Activated naive CD4-positive, alpha-beta T cell treated with anti-CD3 and anti-CD28 coated beads for 36 hours (primary cell): ENCODE measurements at regions of chr7 and their contacts with region 1.

Region 1: GRCh38 chr7:108308903-108309302 is 147.3 kb downstream of the NRCAM start:
- DNase-seq: peak; percentile 34
- H3K4me3 Mint-ChIP-seq: no peak overlapping the region
- H3K27ac Mint-ChIP-seq: no peak overlapping the region
- H3K4me1 Mint-ChIP-seq: peaks cover 24% of the 10 kb centered on the region
- H3K27me3 Mint-ChIP-seq: peaks cover 3% of the 10 kb centered on the region

Region 2: GRCh38 chr7:108190891-108191290 is 118.0 kb before region 1 on chr7:
- CTCF ChIA-PET with region 1: no interaction called
- intact Hi-C with region 1: loop called (anchors 1 kb)
- DNase-seq: no peak
- H3K4me3 Mint-ChIP-seq: no peak overlapping the region
- H3K27ac Mint-ChIP-seq: no peak overlapping the region
- H3K4me1 Mint-ChIP-seq: peaks cover 10% of the 10 kb centered on the region
- H3K27me3 Mint-ChIP-seq: no peaks in the 10 kb centered on the region

Region 3: DNA sequence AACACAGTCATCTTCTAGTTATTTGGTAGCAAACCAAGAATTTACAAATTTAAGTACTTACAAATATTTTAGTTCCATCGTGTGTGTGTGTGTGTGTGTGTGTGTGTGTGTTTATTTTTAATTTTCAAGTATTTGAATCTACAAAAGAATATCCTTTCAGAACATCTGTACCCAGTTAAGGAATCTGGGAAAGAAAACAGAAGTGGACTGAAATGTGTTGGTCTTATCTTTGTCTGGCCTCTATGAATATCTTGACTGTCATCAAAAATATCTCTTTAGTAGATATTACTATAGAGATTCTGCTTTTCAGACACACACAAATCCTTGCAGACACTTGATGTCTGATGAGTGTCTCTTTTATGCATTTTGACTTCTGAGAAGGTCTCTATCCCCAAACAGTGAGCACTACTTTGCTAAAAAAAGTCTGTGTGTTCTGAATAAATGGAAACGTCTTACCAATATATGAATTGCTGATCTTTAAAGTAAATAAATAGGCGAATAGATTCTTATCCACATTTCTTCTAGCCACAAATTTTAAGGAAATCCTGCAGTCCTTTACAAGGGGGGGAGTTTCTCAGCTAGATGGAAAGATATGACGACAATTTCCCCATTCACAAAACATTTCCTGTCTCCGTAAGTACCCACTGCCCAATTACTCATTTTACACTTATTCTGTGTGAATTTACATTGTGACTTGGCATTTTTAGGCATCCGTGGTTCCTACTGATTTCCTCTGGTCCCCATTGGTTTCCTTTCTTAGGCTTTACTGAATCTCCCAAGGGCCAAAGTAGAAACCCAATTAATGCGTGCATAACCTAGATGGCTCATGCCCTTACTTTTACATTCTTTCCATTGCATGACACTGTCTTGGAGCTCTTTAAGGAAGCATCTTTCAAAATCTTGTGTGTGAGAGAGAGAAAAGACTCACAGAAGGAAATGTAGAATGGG is 111.3 kb after region 1 on chr7:
- CTCF ChIA-PET with region 1: interaction called, 3 read pairs
- intact Hi-C with region 1: loop called (anchors 1 kb)
- DNase-seq: no peak
- H3K4me3 Mint-ChIP-seq: no peak overlapping the region
- H3K27ac Mint-ChIP-seq: no peak overlapping the region
- H3K4me1 Mint-ChIP-seq: peaks cover 49% of the 10 kb centered on the region
- H3K27me3 Mint-ChIP-seq: peaks cover 24% of the 10 kb centered on the region

Region 4: GRCh38 chr7:108525985-108526767 is 217.3 kb after region 1 on chr7 and contains the start of gene PNPLA8:
- CTCF ChIA-PET with region 1: no interaction called
- intact Hi-C with region 1: loop called (anchors 1 kb)
- DNase-seq: peak; percentile 100
- H3K4me3 Mint-ChIP-seq: peak within 1 kb of the TSS; percentile 92
- H3K27ac Mint-ChIP-seq: peak within 1 kb of the TSS; percentile 97
- H3K4me1 Mint-ChIP-seq: peaks cover 36% of the 10 kb centered on the region
- H3K27me3 Mint-ChIP-seq: no peaks in the 10 kb centered on the region
- total RNA-seq, gene PNPLA8: 18.8 to 18.9 TPM